ENCODE measurements at regions of chr14 and their contacts with region 1.

Region 1: GRCh38 chr14:24299255-24300195 is at the starts of genes DHRS1 and NOP9:
- DNase-seq: peak; percentile 89 to 92 (median 91)
- ATAC-seq: peak; percentile 86
- H3K4me3 ChIP-seq: peak within 1 kb of the TSS; percentile 71
- H3K27ac ChIP-seq: peak within 1 kb of the TSS; percentile 75
- H3K4me1 ChIP-seq: peaks cover 12 to 14% of the 10 kb centered on the region in 2 experiments; a peak in 4 of 5 replicates
- H3K27me3 ChIP-seq: no peaks in the 10 kb centered on the region
- CTCF ChIP-seq: no peak
- EP300 ChIP-seq: peak; percentile 34; the same call in 1 of the 2 replicates
- POLR2A ChIP-seq: peak; percentile 72; the same call in 1 of the 2 replicates
- RAD21 ChIP-seq: no peak
- polyA plus RNA-seq, gene DHRS1: 32.2 to 33.6 TPM
- polyA plus RNA-seq, gene NOP9: 1.0 to 1.2 TPM

Region 2: GRCh38 chr14:24013654-24014514 is 285.6 kb before region 1 on chr14:
- CTCF ChIA-PET with region 1: interaction called, 5 read pairs
- POLR2A ChIA-PET with region 1: no interaction called
- in situ Hi-C with region 1: loop called (anchors 10 kb)
- intact Hi-C with region 1: no loop called
- DNase-seq: peak; percentile 59 to 69 (median 60)
- ATAC-seq: peak; percentile 83
- H3K4me3 ChIP-seq: no peak overlapping the region
- H3K27ac ChIP-seq: no peak overlapping the region
- H3K4me1 ChIP-seq: no peaks in the 10 kb centered on the region; a peak in 1 of 5 replicates
- H3K27me3 ChIP-seq: no peaks in the 10 kb centered on the region
- CTCF ChIP-seq: peak; percentile 65 to 83 (median 66)
- EP300 ChIP-seq: no peak
- POLR2A ChIP-seq: no peak
- RAD21 ChIP-seq: peak; percentile 82 to 84

Region 3: DNA sequence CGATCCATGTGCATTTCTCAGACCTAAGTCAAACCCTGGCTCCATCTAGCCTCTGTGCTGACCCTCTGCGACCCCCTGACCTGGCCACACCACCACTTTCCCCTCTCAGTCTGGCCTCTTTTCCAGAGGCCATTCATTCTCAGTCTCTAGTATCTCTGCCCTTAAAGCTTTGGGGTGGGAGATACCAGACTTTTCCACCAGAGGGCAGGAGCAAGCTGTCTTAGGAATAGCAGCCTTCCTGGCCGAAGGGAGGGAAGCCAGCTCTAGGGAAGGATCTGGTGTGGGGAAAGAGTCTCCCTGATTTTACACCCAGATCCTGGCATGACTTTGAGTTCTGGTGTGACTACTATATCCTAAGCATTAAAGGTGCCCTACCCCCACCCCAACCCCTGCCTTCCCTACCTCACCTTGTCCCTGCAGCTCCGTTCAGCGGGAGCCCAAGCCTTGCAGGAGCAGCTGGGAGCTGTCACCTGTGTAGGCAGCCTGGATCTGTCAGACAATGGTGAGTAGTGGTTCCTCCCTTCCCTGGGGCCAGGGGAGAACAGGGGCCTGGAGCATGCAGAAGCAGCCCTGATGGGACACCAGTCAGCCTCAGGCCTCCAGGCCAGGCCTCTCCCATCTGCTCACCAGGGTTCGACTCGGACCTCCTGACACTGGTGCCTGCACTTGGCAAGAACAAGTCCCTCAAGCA is 241.1 kb before region 1 on chr14:
- CTCF ChIA-PET with region 1: interaction called, 3 read pairs
- POLR2A ChIA-PET with region 1: no interaction called
- in situ Hi-C with region 1: no loop called
- intact Hi-C with region 1: loop called (anchors 1 kb)
- DNase-seq: peak in 2 of 4 experiments; percentile 59 to 64
- ATAC-seq: peak; percentile 92
- H3K4me3 ChIP-seq: no peak overlapping the region
- H3K27ac ChIP-seq: no peak overlapping the region
- H3K4me1 ChIP-seq: peaks cover 0 to 6% of the 10 kb centered on the region in 2 experiments; a peak in 3 of 5 replicates
- H3K27me3 ChIP-seq: peaks cover 0 to 19% of the 10 kb centered on the region in 2 experiments; a peak in 2 of 5 replicates
- CTCF ChIP-seq: peak; percentile 72 to 82 (median 76)
- EP300 ChIP-seq: no peak
- POLR2A ChIP-seq: no peak
- RAD21 ChIP-seq: peak; percentile 83 to 92

Region 4: GRCh38 chr14:24123508-24124417 is 175.8 kb before region 1 on chr14:
- CTCF ChIA-PET with region 1: no interaction called
- POLR2A ChIA-PET with region 1: no interaction called
- in situ Hi-C with region 1: no loop called
- intact Hi-C with region 1: no loop called
- DNase-seq: no peak
- ATAC-seq: peak; percentile 72
- H3K4me3 ChIP-seq: no peak overlapping the region
- H3K27ac ChIP-seq: no peak overlapping the region; the same call in 2 of the 3 replicates
- H3K4me1 ChIP-seq: peaks cover 6 to 12% of the 10 kb centered on the region in 2 experiments; a peak in 4 of 5 replicates
- H3K27me3 ChIP-seq: no peaks in the 10 kb centered on the region
- CTCF ChIP-seq: no peak
- EP300 ChIP-seq: no peak
- POLR2A ChIP-seq: no peak
- RAD21 ChIP-seq: no peak

Region 5: DNA sequence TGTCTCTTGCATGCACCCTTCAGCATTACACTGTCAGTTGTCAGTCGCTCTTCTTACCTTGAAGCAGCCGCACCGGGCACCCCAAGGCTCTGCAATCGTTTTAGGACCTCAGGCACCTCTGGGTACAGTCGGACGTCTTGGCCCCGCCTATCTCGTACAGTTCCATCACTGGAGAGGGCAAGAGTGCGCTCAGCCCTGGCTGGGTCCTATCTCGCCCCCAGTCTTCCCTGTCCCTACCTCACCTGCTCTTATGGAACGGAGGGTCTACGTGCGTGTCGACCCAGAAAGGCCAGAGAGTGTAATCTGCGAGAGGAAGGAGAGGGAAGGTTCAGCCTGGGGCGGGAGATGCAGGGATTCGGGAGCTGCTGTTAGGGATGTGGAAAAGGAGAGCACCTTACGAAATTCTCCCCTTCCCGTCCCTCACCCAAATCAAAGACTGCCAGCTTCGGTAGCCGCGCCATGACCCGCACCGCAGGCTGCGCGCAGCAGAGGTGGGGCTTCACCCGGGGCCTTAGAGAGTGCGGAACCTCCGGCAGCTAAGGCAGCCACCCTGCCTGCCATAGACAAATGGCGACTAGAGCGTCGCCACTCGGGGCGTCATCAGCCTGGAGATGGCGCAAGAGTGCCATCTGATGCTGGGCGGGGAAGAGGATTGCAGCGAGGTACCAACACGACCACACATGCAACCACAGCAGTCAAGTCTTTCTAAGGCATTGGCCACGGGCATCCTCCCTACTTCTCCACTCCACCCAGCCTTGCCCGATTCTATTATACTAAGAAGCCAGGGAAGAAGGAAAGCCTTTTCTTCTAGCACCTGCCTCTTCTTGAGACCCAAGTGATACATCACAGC is 83.8 kb before region 1 on chr14 and contains the start of gene MDP1:
- CTCF ChIA-PET with region 1: interaction called, 5 read pairs
- POLR2A ChIA-PET with region 1: interaction called, 9 read pairs
- in situ Hi-C with region 1: no loop called
- intact Hi-C with region 1: loop called (anchors 1 kb)
- DNase-seq: peak; percentile 75 to 89 (median 78)
- ATAC-seq: peak; percentile 87
- H3K4me3 ChIP-seq: peak within 1 kb of the TSS; percentile 62
- H3K27ac ChIP-seq: peak within 1 kb of the TSS; percentile 71
- H3K4me1 ChIP-seq: peaks cover 4 to 11% of the 10 kb centered on the region in 2 experiments; a peak in 4 of 5 replicates
- H3K27me3 ChIP-seq: no peaks in the 10 kb centered on the region
- CTCF ChIP-seq: peak; percentile 77 to 82 (median 79)
- EP300 ChIP-seq: peak; percentile 38; the same call in 1 of the 2 replicates
- POLR2A ChIP-seq: peak; percentile 86
- RAD21 ChIP-seq: peak; percentile 50 to 61
- polyA plus RNA-seq, gene MDP1: 27.2 to 29.6 TPM

Region 6: DNA sequence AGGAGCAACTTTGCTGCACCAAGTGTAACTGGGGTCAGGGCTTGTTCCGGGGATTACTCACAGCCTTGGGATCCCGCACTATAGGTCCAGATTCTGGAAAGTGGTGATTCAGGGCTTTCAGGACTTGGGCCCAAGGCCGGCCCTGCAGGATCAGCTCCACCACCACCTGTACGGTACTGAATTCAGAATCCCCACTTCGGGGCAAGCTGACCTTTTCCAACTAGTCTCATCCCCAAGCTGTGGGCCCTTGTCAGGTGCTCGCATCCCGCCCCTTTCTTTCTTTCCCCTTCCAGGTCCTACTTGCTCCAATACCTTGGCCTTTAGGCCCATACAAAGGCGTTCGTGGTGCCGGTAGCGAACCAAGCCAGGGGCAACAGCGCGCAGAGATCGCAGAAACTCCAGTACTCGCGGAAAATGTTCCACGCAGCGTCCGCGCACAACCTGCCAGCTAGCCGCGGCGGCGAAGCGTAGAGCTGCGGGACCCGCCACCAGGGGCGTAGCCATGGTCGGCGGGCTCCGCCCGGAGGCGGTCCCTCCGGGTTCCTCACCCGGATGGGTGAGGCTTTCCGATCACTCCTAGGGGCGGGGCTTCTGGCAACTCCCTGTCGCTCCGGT is 57.6 kb before region 1 on chr14:
- CTCF ChIA-PET with region 1: interaction called, 41 read pairs
- POLR2A ChIA-PET with region 1: interaction called, 18 read pairs
- in situ Hi-C with region 1: loop called (anchors 5 kb)
- intact Hi-C with region 1: loop called (anchors 1 kb)
- DNase-seq: peak; percentile 92 to 95 (median 92)
- ATAC-seq: peak; percentile 94
- H3K4me3 ChIP-seq: peak overlapping the region; percentile 59
- H3K27ac ChIP-seq: peak overlapping the region; percentile 98
- H3K4me1 ChIP-seq: peaks cover 13 to 15% of the 10 kb centered on the region in 2 experiments; a peak in 4 of 5 replicates
- H3K27me3 ChIP-seq: no peaks in the 10 kb centered on the region
- CTCF ChIP-seq: peak; percentile 13 to 49 (median 42); a peak in 2 of 6 replicates
- EP300 ChIP-seq: no peak
- POLR2A ChIP-seq: no peak
- RAD21 ChIP-seq: no peak

Measured in K562 (cell line).